H1 (cell line): ENCODE measurements at regions of chr3 and their contacts with region 1.

Region 1: DNA sequence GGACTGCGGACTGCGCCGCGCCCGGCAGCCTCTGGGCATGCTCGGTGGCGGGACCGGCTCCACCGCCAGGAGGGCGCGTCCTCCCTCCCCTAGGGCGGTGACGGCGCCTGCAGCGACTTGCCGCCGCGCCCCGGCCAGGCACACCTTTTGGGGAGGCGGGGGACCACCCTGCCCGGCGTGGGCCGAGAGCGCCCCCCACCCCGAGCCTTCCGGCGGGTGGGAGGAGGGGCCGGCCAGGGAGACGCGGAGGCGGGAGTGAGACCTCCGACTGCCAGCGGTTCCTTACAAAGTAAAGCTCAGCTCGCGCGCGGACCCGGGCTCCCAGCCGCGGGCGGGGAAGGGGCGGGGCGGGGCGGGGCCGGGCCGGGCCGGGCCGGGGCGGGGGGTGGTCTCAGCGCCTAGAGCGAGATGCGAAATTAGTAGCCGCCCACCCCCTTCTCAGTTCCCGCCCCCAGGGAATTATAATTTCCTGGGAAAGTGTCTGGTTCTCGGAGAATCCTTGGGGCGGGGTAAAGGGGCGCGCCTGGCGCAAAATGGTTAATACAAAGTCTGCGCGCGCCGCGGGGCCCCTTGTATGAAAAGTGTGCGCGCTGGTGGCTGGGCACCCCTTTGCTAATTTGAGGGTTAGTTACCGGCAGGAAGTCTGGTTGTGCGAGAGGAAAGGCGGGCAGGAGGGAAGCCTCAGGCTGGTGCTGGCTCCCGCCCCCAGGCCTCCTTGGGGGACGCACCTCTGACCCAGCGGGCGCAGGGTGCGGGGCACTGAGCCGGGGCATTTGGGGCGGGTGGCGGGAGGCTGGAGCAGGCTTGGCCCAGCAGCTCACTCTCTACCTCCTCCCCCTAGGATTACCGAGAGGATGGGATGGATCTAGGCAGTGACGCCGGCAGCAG is 224.8 kb upstream of the IL12A start:
- DNase-seq: peak; percentile 69 to 87
- H3K4me3 ChIP-seq: peak overlapping the region; percentile 65 to 87 (median 78)
- H3K27ac ChIP-seq: peak overlapping the region; percentile 54
- H3K4me1 ChIP-seq: peaks cover 5 to 19% (median 6%) of the 10 kb centered on the region in 4 experiments; a peak in 6 of 7 replicates
- H3K27me3 ChIP-seq: peaks cover 0 to 2% (median 0%) of the 10 kb centered on the region in 4 experiments; a peak in 2 of 7 replicates
- CTCF ChIP-seq: peak in 2 of 3 experiments; percentile 24 to 29; a peak in 3 of 4 replicates
- EP300 ChIP-seq: no peak
- POLR2A ChIP-seq: peak; percentile 14 to 78; a peak in 2 of 3 replicates
- RAD21 ChIP-seq: no peak; a peak in 1 of 4 replicates

Region 2: DNA sequence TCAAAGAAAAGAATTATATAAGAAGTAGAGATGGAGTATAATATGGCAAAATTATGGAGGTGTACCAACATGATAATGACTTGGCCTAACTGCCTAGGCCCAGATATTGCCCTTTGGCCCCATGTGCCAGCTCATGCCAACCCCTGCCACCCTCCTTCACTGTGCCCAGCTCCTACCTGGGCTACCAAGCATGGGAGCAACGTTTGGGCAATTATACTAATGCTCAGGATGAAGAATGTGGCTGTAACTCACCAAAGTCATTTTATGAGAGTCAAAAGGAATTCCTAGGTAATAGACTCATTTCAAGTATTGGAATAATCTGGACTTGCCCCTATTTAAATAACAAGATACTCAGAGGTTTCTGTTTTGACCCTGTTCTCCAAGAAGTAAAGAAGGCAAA is 15.4 kb before region 1 on chr3:
- CTCF ChIA-PET with region 1: no interaction called
- POLR2A ChIA-PET with region 1: no interaction called
- DNase-seq: no peak
- H3K4me3 ChIP-seq: no peak overlapping the region
- H3K27ac ChIP-seq: no peak overlapping the region
- H3K4me1 ChIP-seq: no peaks in the 10 kb centered on the region
- H3K27me3 ChIP-seq: no peaks in the 10 kb centered on the region
- CTCF ChIP-seq: no peak
- EP300 ChIP-seq: no peak
- POLR2A ChIP-seq: no peak
- RAD21 ChIP-seq: no peak

Region 3: DNA sequence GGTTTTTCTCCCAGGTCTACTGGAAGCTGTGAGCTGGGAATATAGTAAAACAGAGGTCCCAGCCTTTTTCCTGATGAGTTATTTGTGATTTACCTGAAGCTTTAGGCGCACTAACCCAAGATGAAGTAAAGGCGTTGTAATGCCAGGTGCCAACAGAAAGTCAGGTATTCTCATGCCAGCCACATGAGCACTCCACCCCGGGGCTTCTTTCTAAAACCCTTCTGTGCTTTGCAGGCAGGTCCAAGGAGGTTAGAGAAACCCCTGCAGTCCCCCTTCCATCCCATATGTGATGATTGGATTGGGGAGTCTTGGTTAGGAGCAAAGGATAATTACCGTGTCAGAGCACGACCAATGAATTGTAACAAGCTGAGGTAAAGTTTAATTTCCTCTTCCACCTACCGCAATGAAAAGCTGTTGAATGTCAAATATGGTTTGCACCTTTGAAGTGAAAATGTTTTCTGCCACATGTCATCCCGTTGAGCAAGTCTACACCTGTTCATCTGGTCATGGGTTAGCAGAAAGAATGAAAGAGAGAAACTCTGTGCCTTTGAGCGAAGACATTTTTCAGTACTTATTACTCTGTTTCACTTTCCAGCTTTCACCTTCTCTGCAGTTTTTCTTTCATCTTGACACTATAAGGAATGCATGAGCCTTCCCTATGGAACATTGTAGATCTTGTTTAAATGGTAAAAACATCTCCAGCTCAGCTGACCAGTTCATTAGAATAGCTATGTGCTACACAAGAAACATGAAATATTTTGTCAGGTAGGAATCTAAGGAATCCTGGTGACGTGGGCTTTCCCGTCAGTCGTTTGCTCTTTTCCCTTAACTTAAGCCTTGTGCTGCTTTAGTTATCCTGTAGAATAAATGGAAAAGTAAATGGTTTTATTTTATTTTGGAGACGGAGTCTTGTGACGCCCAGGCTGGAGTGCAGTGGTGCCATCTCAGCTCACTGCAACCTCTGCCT is 20.2 kb after region 1 on chr3:
- CTCF ChIA-PET with region 1: interaction called, 30 read pairs
- POLR2A ChIA-PET with region 1: interaction called, 3 read pairs
- DNase-seq: no peak
- H3K4me3 ChIP-seq: no peak overlapping the region
- H3K27ac ChIP-seq: no peak overlapping the region
- H3K4me1 ChIP-seq: peaks cover 0 to 7% (median 0%) of the 10 kb centered on the region in 4 experiments; a peak in 6 of 7 replicates
- H3K27me3 ChIP-seq: no peaks in the 10 kb centered on the region
- CTCF ChIP-seq: no peak
- EP300 ChIP-seq: no peak
- POLR2A ChIP-seq: no peak
- RAD21 ChIP-seq: no peak

Region 4: DNA sequence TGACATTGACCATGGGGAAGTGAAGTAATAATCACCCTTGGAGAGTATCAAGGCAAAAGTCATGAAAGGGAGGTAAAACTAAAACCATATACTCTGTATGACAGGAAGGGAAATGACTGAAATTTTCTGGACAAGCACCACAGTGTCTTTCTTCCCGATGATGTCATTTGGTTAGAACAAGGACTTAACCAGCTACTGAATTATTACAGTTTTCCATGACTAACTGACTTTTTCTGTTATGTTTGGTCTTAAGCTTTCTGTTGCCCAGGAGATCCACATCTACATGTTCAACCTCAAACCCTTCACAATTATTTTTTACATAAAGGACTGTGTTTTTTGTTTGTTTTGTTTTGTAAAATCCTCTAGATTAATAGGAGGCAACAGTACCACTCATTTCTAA is 32.9 kb after region 1 on chr3:
- CTCF ChIA-PET with region 1: interaction called, 11 read pairs
- POLR2A ChIA-PET with region 1: no interaction called
- DNase-seq: no peak
- H3K4me3 ChIP-seq: no peak overlapping the region
- H3K27ac ChIP-seq: no peak overlapping the region
- H3K4me1 ChIP-seq: peaks cover 0 to 5% (median 0%) of the 10 kb centered on the region in 4 experiments; a peak in 2 of 7 replicates
- H3K27me3 ChIP-seq: no peaks in the 10 kb centered on the region
- CTCF ChIP-seq: no peak
- EP300 ChIP-seq: no peak
- POLR2A ChIP-seq: no peak
- RAD21 ChIP-seq: no peak